Activated B cell treated with CpG ODN at 0.5 μM for 24 hours (primary cell): ENCODE measurements at regions of chr20 and their contacts with region 1.

Region 1: DNA sequence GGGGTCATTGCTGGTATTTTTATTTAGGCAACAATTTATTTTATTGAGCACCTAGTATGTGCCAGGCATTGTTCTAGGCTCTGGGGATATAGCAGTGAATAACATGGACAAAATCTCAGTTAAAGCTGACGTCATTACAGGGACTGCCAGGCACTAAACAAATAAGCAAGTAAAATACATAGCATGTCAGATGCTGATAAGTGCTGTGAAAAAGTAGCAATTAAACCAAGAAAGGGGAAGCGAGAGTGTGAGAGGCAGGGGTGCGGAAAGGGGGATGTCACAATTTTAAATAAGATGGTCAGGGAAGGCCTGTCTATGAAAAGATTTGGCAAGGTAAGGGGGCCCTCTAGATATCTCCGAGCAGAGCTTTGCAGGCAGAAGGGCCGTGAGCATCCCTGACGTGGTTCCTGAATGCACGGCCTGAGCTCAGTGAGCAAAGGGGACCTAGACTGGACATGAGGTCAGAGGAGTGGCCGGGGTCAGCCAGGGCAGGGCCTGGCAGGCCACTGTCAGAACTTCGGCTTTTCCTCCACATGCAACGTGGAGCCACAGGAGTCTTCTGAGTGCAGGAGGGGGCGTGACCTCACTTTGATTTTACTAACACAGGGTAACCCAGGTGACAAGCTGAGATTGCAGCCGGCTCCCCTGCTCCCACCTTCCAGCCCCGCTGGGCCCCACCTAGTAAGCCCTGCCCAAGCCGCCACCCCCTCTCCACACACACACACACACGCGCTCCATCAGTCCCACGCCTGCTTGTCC is 24.2 kb upstream of the SIRPA start:
- DNase-seq: peak; percentile 58
- ATAC-seq: peak; percentile 76
- H3K4me3 Mint-ChIP-seq: peak overlapping the region; percentile 59
- H3K27ac Mint-ChIP-seq: peak overlapping the region; percentile 79
- H3K4me1 Mint-ChIP-seq: peaks cover 62% of the 10 kb centered on the region
- H3K27me3 Mint-ChIP-seq: peaks cover 11% of the 10 kb centered on the region
- CTCF ChIP-seq: no peak

Region 2: DNA sequence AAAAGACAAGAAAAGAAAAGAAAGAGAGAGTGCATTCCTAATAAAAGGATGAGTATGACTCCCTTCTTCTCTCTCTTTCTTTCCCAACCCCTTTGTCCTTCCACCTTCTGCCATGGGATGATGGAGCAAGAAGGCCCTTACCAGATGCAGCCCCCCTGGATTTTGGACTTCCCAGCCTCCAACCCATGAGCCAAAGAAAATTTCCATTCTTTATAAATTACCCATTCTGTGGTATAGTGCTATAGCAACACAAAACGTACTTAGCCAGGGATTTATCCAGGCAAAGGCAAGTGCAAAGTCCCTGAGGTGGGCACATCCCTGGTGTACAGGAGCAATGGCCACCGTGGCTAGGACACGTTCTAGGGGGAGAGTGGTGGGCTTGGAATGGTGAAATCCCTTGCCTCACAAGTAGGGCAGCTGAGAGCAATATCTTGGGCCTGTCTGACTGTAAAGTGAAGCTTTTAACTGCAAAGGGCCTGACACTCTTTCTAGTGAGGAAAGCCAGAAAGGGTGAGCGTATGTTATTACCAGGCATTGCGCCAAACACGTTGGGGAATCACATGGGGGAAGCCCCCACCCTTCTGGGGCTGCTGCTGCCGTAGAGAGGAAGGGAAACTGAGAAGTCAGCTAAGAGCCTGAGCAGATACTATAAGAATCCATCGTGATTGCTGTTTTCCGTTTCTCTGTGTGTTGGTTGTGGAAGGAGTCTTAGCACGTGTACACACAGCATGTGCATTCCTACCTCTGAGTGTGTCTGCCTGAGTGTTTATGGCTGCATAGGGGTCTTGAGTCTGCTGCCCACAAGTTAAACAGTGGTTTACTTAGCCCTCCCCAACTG is 26.4 kb before region 1 on chr20:
- CTCF ChIA-PET with region 1: interaction called, 9 read pairs
- POLR2A ChIA-PET with region 1: interaction called, 28 read pairs
- intact Hi-C with region 1: loop called (anchors 1 kb)
- DNase-seq: peak; percentile 61
- ATAC-seq: peak; percentile 98
- H3K4me3 Mint-ChIP-seq: peak overlapping the region; percentile 65
- H3K27ac Mint-ChIP-seq: peak overlapping the region; percentile 78
- H3K4me1 Mint-ChIP-seq: peaks cover 73% of the 10 kb centered on the region
- H3K27me3 Mint-ChIP-seq: no peaks in the 10 kb centered on the region
- CTCF ChIP-seq: no peak

Region 3: DNA sequence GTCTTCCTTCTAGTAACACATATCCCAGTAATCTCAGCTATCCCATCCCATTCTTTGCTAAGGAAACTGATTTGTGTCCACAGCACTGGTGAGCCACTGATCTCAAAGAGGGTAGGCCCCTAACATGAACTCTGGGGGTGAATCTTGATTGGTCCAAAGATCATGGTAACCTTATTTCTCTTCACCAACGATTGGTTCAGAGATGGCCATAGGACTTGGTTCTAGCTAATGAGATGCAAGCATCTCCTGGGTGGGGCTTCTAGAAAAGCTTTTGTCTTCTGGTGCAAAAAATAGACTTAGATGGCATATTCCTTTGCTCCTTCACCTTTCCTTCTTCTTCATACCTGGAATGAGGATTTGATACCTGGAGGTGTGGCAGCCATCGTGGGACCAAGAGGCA is 19.6 kb before region 1 on chr20:
- CTCF ChIA-PET with region 1: interaction called, 8 read pairs
- POLR2A ChIA-PET with region 1: interaction called, 28 read pairs
- intact Hi-C with region 1: loop called (anchors 1 kb)
- DNase-seq: no peak
- ATAC-seq: no peak
- H3K4me3 Mint-ChIP-seq: peak overlapping the region; percentile 63
- H3K27ac Mint-ChIP-seq: peak overlapping the region; percentile 85
- H3K4me1 Mint-ChIP-seq: peaks cover 66% of the 10 kb centered on the region
- H3K27me3 Mint-ChIP-seq: no peaks in the 10 kb centered on the region
- CTCF ChIP-seq: no peak

Region 4: DNA sequence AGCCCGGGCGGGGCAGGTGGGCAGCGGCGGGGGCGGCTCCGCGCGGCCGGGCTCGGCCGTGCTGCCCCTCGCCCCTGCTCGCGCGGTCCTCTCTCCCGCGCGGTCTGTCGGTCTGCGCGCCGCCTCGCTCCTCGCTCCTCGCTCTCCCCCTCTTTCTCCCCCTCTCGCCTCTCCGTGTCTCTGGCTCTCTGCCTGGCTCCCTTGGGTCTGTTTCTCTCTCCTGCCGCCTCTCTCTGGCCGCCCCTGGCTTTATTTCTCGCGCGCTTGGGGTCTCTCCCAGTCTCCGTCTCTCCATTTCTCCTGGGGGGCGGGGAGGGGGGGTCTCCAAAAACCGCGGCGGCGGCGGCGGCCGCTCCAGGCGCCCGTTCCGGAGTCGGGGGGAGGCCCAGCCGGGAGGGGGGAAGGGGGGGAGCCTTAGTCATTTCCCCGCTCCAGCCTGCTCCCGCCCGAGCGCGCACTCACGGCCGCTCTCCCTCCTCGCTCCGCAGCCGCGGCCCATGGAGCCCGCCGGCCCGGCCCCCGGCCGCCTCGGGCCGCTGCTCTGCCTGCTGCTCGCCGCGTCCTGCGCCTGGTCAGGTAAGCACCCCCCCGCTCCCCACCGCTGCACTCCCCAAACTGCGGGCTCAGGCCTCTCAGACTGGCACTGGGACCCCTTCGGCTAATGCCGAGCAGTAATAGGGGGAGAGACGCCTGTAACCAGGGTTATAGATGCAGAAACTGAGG is 24.1 kb after region 1 on chr20 and contains the start of gene SIRPA:
- CTCF ChIA-PET with region 1: no interaction called
- POLR2A ChIA-PET with region 1: interaction called, 12 read pairs
- intact Hi-C with region 1: loop called (anchors 1 kb)
- DNase-seq: no peak
- ATAC-seq: peak; percentile 7
- H3K4me3 Mint-ChIP-seq: peak within 1 kb of the TSS; percentile 83
- H3K27ac Mint-ChIP-seq: peak within 1 kb of the TSS; percentile 79
- H3K4me1 Mint-ChIP-seq: peaks cover 56% of the 10 kb centered on the region
- H3K27me3 Mint-ChIP-seq: no peaks in the 10 kb centered on the region
- CTCF ChIP-seq: no peak
- total RNA-seq, gene SIRPA: 10.1 and 10.2 TPM in 2 replicates

Region 5: GRCh38 chr20:1900321-1900801 is 29.4 kb after region 1 on chr20:
- CTCF ChIA-PET with region 1: no interaction called
- POLR2A ChIA-PET with region 1: interaction called, 12 read pairs
- intact Hi-C with region 1: loop called (anchors 1 kb)
- DNase-seq: no peak
- ATAC-seq: peak; percentile 11
- H3K4me3 Mint-ChIP-seq: no peak overlapping the region
- H3K27ac Mint-ChIP-seq: no peak overlapping the region
- H3K4me1 Mint-ChIP-seq: peaks cover 49% of the 10 kb centered on the region
- H3K27me3 Mint-ChIP-seq: no peaks in the 10 kb centered on the region
- CTCF ChIP-seq: no peak

Region 6: DNA sequence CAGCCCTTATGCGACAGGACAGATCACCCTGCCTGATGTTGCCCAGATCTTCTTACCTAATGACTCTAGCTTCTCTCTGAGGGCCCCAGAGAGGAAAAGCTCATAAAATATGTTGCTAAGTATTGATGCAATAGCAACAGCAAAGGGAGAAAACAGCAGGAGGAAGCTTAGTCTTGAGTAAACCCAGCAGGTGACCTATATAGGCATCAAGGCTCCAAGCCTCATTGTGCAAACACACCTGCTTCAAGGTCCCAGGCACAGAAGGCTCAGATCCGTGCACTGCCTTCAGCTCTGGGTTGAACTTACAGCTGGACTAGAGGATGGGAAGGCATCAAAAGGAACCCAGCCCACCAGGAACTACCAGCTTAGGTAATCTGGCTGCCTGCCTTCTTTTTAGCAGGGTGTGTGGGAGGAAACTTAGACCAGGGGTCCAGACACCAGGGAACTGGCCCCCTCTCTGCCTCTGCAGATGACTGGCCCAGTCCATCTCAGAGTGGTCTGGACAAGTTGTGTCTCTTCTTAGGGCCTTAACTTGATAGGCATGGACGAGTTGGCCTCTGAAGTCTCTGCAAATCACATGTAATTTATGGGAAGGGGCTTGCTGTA is 459.2 kb after region 1 on chr20:
- CTCF ChIA-PET with region 1: no interaction called
- POLR2A ChIA-PET with region 1: no interaction called
- intact Hi-C with region 1: no loop called
- DNase-seq: no peak
- ATAC-seq: no peak
- H3K4me3 Mint-ChIP-seq: no peak overlapping the region
- H3K27ac Mint-ChIP-seq: no peak overlapping the region
- H3K4me1 Mint-ChIP-seq: no peaks in the 10 kb centered on the region
- H3K27me3 Mint-ChIP-seq: peaks cover 10% of the 10 kb centered on the region
- CTCF ChIP-seq: no peak

Region 7: GRCh38 chr20:3010985-3011723 is 1140.2 kb after region 1 on chr20:
- CTCF ChIA-PET with region 1: no interaction called
- POLR2A ChIA-PET with region 1: no interaction called
- intact Hi-C with region 1: no loop called
- DNase-seq: no peak
- ATAC-seq: no peak
- H3K4me3 Mint-ChIP-seq: no peak overlapping the region
- H3K27ac Mint-ChIP-seq: no peak overlapping the region
- H3K4me1 Mint-ChIP-seq: no peaks in the 10 kb centered on the region
- H3K27me3 Mint-ChIP-seq: no peaks in the 10 kb centered on the region
- CTCF ChIP-seq: no peak